Right lobe of liver (tissue), 6 donors: ENCODE measurements at regions of chr4 and their contacts with region 1.

Region 1: GRCh38 chr4:104064646-104065577 is 345.1 kb upstream of the TACR3 start:
- DNase-seq: peak; percentile 52 to 70 (median 67)
- ATAC-seq: peak; percentile 99 to 100 (median 100)
- H3K4me3 ChIP-seq: no peak overlapping the region
- H3K27ac ChIP-seq: no peak overlapping the region
- H3K4me1 ChIP-seq: no peaks in the 10 kb centered on the region
- H3K27me3 ChIP-seq: no peaks in the 10 kb centered on the region
- CTCF ChIP-seq: peak; percentile 64 to 74 (median 68)
- POLR2A ChIP-seq: no peak

Region 2: DNA sequence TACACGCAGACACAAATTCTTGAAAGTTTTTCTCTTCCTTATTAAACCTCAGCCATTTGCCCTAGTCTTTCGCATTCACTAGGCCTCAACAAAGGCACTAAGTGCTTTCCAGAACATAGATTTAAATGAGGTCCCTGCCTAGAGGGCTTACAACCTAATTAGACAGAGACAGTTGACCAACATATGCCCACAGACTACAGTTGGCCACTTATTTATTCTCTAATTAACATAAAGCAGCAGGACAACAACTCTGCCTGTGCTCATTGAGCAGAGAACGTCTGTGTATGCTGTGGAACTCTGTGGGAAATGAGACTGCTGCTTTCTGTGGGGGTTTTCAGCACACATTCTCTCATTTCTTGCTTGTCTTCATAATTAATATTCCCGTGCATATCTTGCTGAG is 42.1 kb before region 1 on chr4:
- intact Hi-C with region 1: no loop called
- DNase-seq: no peak
- ATAC-seq: no peak
- H3K4me3 ChIP-seq: no peak overlapping the region
- H3K27ac ChIP-seq: no peak overlapping the region
- H3K4me1 ChIP-seq: no peaks in the 10 kb centered on the region
- H3K27me3 ChIP-seq: no peaks in the 10 kb centered on the region
- CTCF ChIP-seq: no peak
- POLR2A ChIP-seq: no peak

Region 3: DNA sequence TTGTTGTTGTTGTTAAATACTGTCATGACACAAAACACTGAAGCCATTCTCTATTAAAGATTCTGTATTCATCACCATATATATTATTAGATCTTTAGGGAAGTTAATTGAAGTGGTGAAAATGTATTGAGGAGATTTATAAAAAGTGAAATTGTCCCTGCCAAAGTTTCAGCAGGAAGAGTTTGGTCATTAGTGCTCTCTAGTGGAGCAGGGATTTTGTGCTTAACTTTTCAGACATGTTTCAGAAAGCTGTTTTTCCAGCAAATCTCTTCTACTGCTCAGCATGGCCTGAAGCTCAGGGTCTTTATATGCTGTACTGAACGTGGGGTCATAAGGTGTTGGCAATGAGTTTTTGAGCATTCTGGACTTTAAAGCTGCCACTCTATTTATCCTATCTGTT is 466.5 kb after region 1 on chr4:
- intact Hi-C with region 1: loop called in 1 of 2 experiments (anchors 10 kb)
- DNase-seq: no peak
- ATAC-seq: peak in 3 of 4 donors; percentile 40 to 56 (median 50)
- H3K4me3 ChIP-seq: no peak overlapping the region
- H3K27ac ChIP-seq: no peak overlapping the region
- H3K4me1 ChIP-seq: no peaks in the 10 kb centered on the region
- H3K27me3 ChIP-seq: no peaks in the 10 kb centered on the region
- CTCF ChIP-seq: peak; percentile 14 to 42 (median 22)
- POLR2A ChIP-seq: no peak

Region 4: GRCh38 chr4:104818579-104818978 is 753.7 kb after region 1 on chr4:
- intact Hi-C with region 1: no loop called
- DNase-seq: no peak
- ATAC-seq: no peak
- H3K4me3 ChIP-seq: no peak overlapping the region
- H3K27ac ChIP-seq: no peak overlapping the region
- H3K4me1 ChIP-seq: no peaks in the 10 kb centered on the region
- H3K27me3 ChIP-seq: no peaks in the 10 kb centered on the region
- CTCF ChIP-seq: no peak
- POLR2A ChIP-seq: no peak